Natural killer cell (primary cell): ENCODE measurements at regions of chr10 and their contacts with region 1.

Region 1: GRCh38 chr10:52215745-52216361 is 98.2 kb upstream of the DKK1 start:
- DNase-seq: peak in 1 of 2 donors; percentile 71
- ATAC-seq: peak; percentile 66 to 81 (median 68)
- H3K4me3 ChIP-seq: no peak overlapping the region
- H3K4me3 Mint-ChIP-seq: no peak overlapping the region
- H3K27ac ChIP-seq: no peak overlapping the region
- H3K27ac Mint-ChIP-seq: no peak overlapping the region
- H3K4me1 ChIP-seq: no peaks in the 10 kb centered on the region
- H3K4me1 Mint-ChIP-seq: no peaks in the 10 kb centered on the region
- H3K27me3 ChIP-seq: no peaks in the 10 kb centered on the region
- H3K27me3 Mint-ChIP-seq: no peaks in the 10 kb centered on the region
- CTCF ChIP-seq: peak; percentile 68

Region 2: DNA sequence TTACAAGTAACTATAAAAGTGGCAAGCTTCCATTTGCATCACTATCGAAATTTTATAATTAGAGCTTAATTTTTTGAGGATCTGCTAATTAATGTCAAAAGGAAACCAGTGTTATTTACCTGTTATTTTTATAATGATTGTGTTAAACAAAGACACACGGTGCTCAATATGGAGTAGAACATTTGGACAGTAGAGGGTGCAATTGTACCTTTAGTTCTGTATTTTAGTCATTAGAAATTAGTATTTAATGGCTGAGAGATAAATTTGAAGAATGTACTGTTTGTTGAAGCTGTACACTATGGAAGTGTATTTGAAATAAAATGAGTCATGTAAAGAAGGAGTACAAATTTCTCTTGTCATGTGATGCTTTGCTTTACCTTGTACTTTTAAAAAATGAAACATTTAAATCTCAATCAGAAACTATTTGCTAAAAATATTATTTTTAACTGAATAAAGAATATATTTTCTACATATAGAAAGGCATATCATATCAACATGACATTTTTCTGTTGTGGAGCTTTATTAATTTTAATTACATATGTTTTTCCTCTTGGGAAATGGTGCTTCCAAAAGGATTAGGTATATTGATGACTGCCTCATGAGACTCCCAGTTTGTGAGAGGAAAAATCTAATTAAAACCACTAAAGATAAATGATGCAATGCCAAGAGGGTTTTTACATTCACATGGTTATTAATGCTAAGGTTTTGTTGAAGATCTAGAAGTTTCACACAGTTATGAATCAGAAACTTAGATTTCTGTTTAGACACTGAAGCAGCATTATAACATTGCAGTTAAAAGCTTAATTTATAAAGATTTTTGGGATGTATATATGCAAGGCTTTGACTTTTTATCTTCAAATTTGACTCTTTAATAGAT is 1152.0 kb before region 1 on chr10:
- intact Hi-C with region 1: loop called (anchors 5 kb)
- DNase-seq: peak in 1 of 2 donors; percentile 19
- ATAC-seq: no peak
- H3K4me3 ChIP-seq: no peak overlapping the region
- H3K4me3 Mint-ChIP-seq: no peak overlapping the region
- H3K27ac ChIP-seq: no peak overlapping the region
- H3K27ac Mint-ChIP-seq: no peak overlapping the region
- H3K4me1 ChIP-seq: no peaks in the 10 kb centered on the region
- H3K4me1 Mint-ChIP-seq: no peaks in the 10 kb centered on the region
- H3K27me3 ChIP-seq: no peaks in the 10 kb centered on the region
- H3K27me3 Mint-ChIP-seq: no peaks in the 10 kb centered on the region
- CTCF ChIP-seq: no peak

Region 3: DNA sequence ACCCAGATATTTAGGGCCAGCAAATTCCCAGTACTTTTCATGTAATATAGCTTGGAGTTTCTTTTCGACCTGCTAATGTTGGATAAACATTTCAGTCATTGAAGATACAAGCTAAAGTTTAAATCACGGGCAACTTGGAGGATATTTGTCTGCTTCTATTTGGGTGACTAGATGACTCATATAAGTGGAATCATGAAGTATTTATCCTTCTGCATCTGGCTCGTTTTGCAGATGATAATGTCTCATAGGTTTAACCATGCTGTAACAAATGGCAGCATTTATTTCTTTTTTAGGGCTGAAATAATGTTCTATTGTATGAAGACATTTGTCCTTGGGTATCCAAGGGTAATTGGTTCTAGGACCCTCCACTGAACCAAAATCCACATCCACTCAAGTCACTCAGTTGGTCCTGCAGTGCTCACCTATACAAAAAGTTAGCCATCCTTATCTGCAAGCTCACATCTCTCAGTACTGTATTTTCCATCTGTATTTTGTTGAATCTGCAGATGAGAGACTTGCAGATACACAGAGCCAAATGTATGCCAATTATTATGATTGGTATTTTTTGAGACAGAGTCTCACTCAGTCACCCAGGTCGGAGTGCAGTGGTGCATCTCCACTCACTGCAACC is 329.3 kb before region 1 on chr10:
- intact Hi-C with region 1: no loop called
- DNase-seq: no peak
- ATAC-seq: no peak
- H3K4me3 ChIP-seq: no peak overlapping the region
- H3K4me3 Mint-ChIP-seq: no peak overlapping the region
- H3K27ac ChIP-seq: no peak overlapping the region
- H3K27ac Mint-ChIP-seq: no peak overlapping the region
- H3K4me1 ChIP-seq: no peaks in the 10 kb centered on the region
- H3K4me1 Mint-ChIP-seq: no peaks in the 10 kb centered on the region
- H3K27me3 ChIP-seq: no peaks in the 10 kb centered on the region
- H3K27me3 Mint-ChIP-seq: no peaks in the 10 kb centered on the region
- CTCF ChIP-seq: no peak

Region 4: GRCh38 chr10:52525761-52526160 is 309.9 kb after region 1 on chr10:
- intact Hi-C with region 1: no loop called
- DNase-seq: no peak
- ATAC-seq: no peak
- H3K4me3 ChIP-seq: no peak overlapping the region
- H3K4me3 Mint-ChIP-seq: no peak overlapping the region
- H3K27ac ChIP-seq: no peak overlapping the region
- H3K27ac Mint-ChIP-seq: no peak overlapping the region
- H3K4me1 ChIP-seq: no peaks in the 10 kb centered on the region
- H3K4me1 Mint-ChIP-seq: no peaks in the 10 kb centered on the region
- H3K27me3 ChIP-seq: no peaks in the 10 kb centered on the region
- H3K27me3 Mint-ChIP-seq: no peaks in the 10 kb centered on the region
- CTCF ChIP-seq: no peak